Right cardiac atrium (tissue), 5 donors: ENCODE measurements at regions of chr12 and their contacts with region 1.

Region 1: GRCh38 chr12:131830335-131830913 is 2.2 kb downstream of the MMP17 start:
- DNase-seq: peak; percentile 85 to 94 (median 93)
- ATAC-seq: peak; percentile 90 to 92
- H3K4me3 ChIP-seq: peak overlapping the region; percentile 48
- H3K27ac ChIP-seq: no peak overlapping the region
- H3K4me1 ChIP-seq: no peaks in the 10 kb centered on the region
- H3K27me3 ChIP-seq: no peaks in the 10 kb centered on the region

Region 2: GRCh38 chr12:131928711-131929580 is 98.5 kb after region 1 on chr12 and contains the start of gene PUS1:
- intact Hi-C with region 1: loop called in 1 of 4 experiments (anchors 10 kb)
- DNase-seq: peak; percentile 95 to 98 (median 97)
- ATAC-seq: peak; percentile 96
- H3K4me3 ChIP-seq: peak within 1 kb of the TSS; percentile 60
- H3K27ac ChIP-seq: peak within 1 kb of the TSS; percentile 46
- H3K4me1 ChIP-seq: no peaks in the 10 kb centered on the region
- H3K27me3 ChIP-seq: no peaks in the 10 kb centered on the region
- total RNA-seq, gene PUS1: 7.2 to 13.7 (median 7.9) TPM